H1 (cell line): ENCODE measurements at regions of chr17 and their contacts with region 1.

Region 1: DNA sequence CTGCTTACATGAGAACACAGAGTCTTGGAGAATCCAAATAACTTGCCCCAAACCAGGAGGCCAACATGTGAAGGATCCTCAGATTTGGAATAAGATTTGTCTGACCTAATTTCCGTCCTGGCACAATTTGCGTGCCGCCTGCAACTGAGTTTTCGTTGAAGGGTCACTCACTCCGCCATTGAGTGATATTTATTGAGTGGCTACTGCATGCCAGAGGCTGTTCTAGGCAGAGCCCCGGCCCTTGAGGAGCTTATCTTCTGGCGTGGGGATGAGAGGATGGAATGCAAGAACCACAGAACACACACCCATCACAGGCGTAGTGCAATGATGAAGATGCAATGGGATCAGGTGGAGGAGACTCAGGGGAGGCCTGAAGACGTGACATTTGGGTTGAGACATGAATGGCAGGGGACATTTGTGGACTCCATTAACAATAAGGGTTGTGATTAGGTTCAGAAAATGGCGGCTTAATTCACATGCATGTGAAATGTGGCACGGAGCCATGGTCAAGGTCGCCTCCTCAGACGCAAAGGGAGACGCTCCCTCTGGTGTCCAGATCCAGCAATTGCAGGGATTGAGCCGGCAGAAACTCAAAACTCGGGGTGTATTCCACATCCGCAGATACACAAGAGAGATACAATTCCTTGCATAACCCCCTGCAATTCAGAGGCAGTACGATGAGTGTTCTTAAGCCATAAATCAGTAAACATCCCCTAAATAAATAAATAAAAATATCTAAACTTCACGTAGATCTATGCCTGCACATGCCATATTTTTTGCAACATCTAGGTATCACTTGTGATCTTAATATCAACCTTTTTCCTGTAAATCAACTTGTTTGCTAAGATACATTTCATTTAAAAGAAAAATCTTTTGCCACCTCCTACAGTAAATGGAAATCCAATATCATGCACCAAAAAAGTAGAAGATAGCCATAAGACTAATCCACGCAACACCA is 57.9 kb upstream of the CACNG4 start:
- DNase-seq: peak; percentile 54 to 85
- H3K4me3 ChIP-seq: no peak overlapping the region
- H3K27ac ChIP-seq: no peak overlapping the region
- H3K4me1 ChIP-seq: no peaks in the 10 kb centered on the region
- H3K27me3 ChIP-seq: peaks cover 0 to 6% (median 2%) of the 10 kb centered on the region in 4 experiments; a peak in 1 of 7 replicates
- CTCF ChIP-seq: peak; percentile 88 to 92 (median 90)
- EP300 ChIP-seq: no peak
- POLR2A ChIP-seq: no peak
- RAD21 ChIP-seq: peak; percentile 97 to 98

Region 2: GRCh38 chr17:66717641-66718058 is 188.9 kb before region 1 on chr17:
- CTCF ChIA-PET with region 1: interaction called, 20 read pairs
- POLR2A ChIA-PET with region 1: interaction called, 3 read pairs
- DNase-seq: no peak
- H3K4me3 ChIP-seq: no peak overlapping the region
- H3K27ac ChIP-seq: no peak overlapping the region
- H3K4me1 ChIP-seq: peaks cover 9 to 29% (median 13%) of the 10 kb centered on the region in 4 experiments
- H3K27me3 ChIP-seq: no peaks in the 10 kb centered on the region
- CTCF ChIP-seq: no peak
- EP300 ChIP-seq: no peak
- POLR2A ChIP-seq: no peak
- RAD21 ChIP-seq: no peak

Region 3: DNA sequence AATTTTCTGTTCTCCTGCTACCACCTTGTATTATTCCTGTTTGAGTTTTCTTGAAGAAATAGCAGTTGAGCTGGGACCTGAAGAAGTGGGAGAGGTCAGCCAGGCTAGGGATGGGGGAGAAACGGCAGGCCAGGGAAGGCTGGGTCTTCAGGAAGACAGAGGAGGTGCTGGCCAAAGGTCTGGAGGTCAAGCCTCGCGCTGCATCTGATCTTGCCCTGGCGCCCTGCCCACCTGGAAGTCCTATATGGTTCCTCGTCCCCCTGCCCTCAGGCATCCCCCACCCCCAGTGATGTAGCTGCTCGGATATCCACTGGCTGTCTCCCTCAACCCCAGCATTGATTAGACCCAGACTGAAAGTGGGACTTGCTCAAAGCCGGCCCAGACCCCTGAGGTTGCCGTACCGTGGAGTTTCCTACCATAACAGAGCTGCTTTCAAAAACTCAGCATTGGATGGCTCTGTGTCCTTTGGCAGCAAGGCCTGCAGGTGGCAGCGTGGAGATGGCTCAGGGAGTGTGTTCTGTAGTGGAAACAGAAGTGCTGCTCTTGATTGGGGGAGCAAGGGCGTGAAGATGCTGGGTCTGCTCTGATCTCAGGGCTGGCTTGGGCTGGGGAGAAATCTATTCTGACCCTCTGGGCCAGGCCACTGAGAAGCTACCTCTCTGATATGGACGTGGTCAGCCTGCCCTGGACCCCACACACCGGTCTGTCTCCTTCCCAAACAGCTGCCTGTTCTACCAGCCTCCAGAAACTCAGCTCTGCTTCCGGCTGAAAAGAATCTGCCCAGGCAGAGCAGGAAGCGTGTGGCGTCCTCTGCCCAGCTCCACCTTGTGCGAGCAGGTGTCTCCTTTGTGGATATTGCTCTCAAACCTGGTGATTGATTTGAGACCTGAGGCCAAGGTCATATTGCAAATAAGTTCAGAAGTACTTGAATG is 178.7 kb before region 1 on chr17:
- CTCF ChIA-PET with region 1: interaction called, 59 read pairs
- POLR2A ChIA-PET with region 1: no interaction called
- DNase-seq: peak; percentile 31 to 78
- H3K4me3 ChIP-seq: no peak overlapping the region
- H3K27ac ChIP-seq: no peak overlapping the region
- H3K4me1 ChIP-seq: peaks cover 9 to 26% (median 18%) of the 10 kb centered on the region in 4 experiments
- H3K27me3 ChIP-seq: no peaks in the 10 kb centered on the region
- CTCF ChIP-seq: peak; percentile 82 to 92 (median 88)
- EP300 ChIP-seq: no peak
- POLR2A ChIP-seq: no peak
- RAD21 ChIP-seq: peak; percentile 85 to 93

Region 4: GRCh38 chr17:66975604-66976384 is 69.2 kb after region 1 on chr17:
- CTCF ChIA-PET with region 1: interaction called, 14 read pairs
- POLR2A ChIA-PET with region 1: no interaction called
- DNase-seq: peak in 1 of 2 experiments; percentile 69
- H3K4me3 ChIP-seq: no peak overlapping the region
- H3K27ac ChIP-seq: no peak overlapping the region
- H3K4me1 ChIP-seq: peaks cover 0 to 2% (median 1%) of the 10 kb centered on the region in 4 experiments; a peak in 2 of 7 replicates
- H3K27me3 ChIP-seq: no peaks in the 10 kb centered on the region
- CTCF ChIP-seq: peak; percentile 49 to 75 (median 67)
- EP300 ChIP-seq: no peak
- POLR2A ChIP-seq: no peak
- RAD21 ChIP-seq: peak; percentile 83 to 91